Activated CD8-positive, alpha-beta T cell treated with anti-CD3 and anti-CD28 coated beads, Interleukin-2, amount 10 ng/mL, durations not matched to agents 7 days and 5 days (primary cell): ENCODE measurements at regions of chr11 and their contacts with region 1.

Region 1: GRCh38 chr11:17230867-17231851 is 23.4 kb upstream of the PIK3C2A start:
- DNase-seq: peak; percentile 68
- ATAC-seq: peak; percentile 94
- H3K4me3 Mint-ChIP-seq: peak overlapping the region; percentile 50
- H3K27ac Mint-ChIP-seq: peak overlapping the region; percentile 39
- H3K4me1 Mint-ChIP-seq: peaks cover 18% of the 10 kb centered on the region
- H3K27me3 Mint-ChIP-seq: peaks cover 8% of the 10 kb centered on the region

Region 2: GRCh38 chr11:17197431-17197898 is 33.7 kb before region 1 on chr11:
- CTCF ChIA-PET with region 1: no interaction called
- POLR2A ChIA-PET with region 1: no interaction called
- DNase-seq: no peak
- ATAC-seq: no peak
- H3K4me3 Mint-ChIP-seq: no peak overlapping the region
- H3K27ac Mint-ChIP-seq: no peak overlapping the region
- H3K4me1 Mint-ChIP-seq: no peaks in the 10 kb centered on the region
- H3K27me3 Mint-ChIP-seq: no peaks in the 10 kb centered on the region

Region 3: GRCh38 chr11:17244046-17244445 is 12.9 kb after region 1 on chr11:
- CTCF ChIA-PET with region 1: interaction called, 26 read pairs
- POLR2A ChIA-PET with region 1: interaction called, 3 read pairs
- DNase-seq: no peak
- ATAC-seq: peak; percentile 38
- H3K4me3 Mint-ChIP-seq: no peak overlapping the region
- H3K27ac Mint-ChIP-seq: no peak overlapping the region
- H3K4me1 Mint-ChIP-seq: peaks cover 17% of the 10 kb centered on the region
- H3K27me3 Mint-ChIP-seq: peaks cover 22% of the 10 kb centered on the region

Region 4: DNA sequence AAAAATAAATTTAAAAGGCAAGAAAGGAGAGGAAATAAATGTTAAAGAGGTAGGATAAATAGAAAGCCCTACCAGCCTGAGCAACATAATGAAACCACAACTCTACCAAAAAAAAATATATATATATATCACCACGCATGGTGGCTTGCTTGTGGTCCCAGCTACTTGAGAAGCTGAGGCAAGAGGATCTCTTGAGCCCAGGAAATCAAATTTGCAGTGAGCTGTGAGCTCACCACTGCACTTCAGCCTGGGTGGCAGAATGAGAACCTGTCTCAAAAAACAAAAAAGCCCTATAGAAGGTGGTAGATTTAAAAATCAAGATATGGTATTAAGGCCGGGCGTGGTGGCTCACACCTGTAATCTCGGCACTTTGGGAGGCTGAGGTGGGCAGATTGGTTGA is 55.9 kb after region 1 on chr11:
- CTCF ChIA-PET with region 1: interaction called, 29 read pairs
- POLR2A ChIA-PET with region 1: interaction called, 3 read pairs
- DNase-seq: peak; percentile 47
- ATAC-seq: peak; percentile 55
- H3K4me3 Mint-ChIP-seq: no peak overlapping the region
- H3K27ac Mint-ChIP-seq: peak overlapping the region; percentile 37
- H3K4me1 Mint-ChIP-seq: peaks cover 50% of the 10 kb centered on the region
- H3K27me3 Mint-ChIP-seq: no peaks in the 10 kb centered on the region

Region 5: GRCh38 chr11:17314232-17314547 is 83.0 kb after region 1 on chr11:
- CTCF ChIA-PET with region 1: interaction called, 10 read pairs
- POLR2A ChIA-PET with region 1: no interaction called
- DNase-seq: no peak
- ATAC-seq: no peak
- H3K4me3 Mint-ChIP-seq: no peak overlapping the region
- H3K27ac Mint-ChIP-seq: no peak overlapping the region
- H3K4me1 Mint-ChIP-seq: no peaks in the 10 kb centered on the region
- H3K27me3 Mint-ChIP-seq: no peaks in the 10 kb centered on the region